HEK293 (cell line): ENCODE measurements at regions of chr6 and their contacts with region 1.

Region 1: GRCh38 chr6:131532580-131533039 is 40.4 kb upstream of the ARG1 start:
- H3K4me3 ChIP-seq: no peak overlapping the region
- H3K27ac ChIP-seq: no peak overlapping the region
- H3K4me1 ChIP-seq: no peaks in the 10 kb centered on the region
- CTCF ChIP-seq: no peak

Region 2: DNA sequence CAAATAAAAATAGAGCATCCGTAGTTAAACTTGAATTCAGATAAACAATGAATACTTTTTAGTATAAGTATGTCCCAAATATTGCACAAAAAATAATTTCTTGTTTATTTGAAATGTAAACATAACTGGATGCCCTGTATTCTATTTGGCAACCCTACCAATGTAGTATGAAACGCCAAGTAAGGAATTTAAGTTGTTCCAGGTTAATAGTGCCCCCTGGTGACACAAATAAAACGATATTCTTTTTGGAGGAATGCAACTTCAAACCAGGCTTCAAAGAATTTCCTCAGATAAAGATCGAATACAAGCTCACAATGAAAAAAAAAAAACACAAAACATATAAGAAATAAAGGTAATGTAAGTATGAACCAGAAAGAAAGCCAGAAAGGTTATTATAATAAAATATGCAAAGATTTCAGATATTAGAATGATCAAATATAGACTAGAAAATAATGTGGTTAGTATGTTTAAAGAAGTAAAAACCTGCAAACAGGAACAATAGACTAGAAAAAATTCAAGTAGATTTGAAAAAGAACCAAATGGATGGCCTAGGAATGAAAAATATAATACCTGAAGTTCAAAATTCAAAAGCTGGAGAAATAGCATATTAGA is 415.8 kb before region 1 on chr6:
- CTCF ChIA-PET with region 1: interaction called, 10 read pairs
- POLR2A ChIA-PET with region 1: no interaction called
- H3K4me3 ChIP-seq: no peak overlapping the region
- H3K27ac ChIP-seq: no peak overlapping the region
- H3K4me1 ChIP-seq: no peaks in the 10 kb centered on the region
- CTCF ChIP-seq: no peak

Region 3: DNA sequence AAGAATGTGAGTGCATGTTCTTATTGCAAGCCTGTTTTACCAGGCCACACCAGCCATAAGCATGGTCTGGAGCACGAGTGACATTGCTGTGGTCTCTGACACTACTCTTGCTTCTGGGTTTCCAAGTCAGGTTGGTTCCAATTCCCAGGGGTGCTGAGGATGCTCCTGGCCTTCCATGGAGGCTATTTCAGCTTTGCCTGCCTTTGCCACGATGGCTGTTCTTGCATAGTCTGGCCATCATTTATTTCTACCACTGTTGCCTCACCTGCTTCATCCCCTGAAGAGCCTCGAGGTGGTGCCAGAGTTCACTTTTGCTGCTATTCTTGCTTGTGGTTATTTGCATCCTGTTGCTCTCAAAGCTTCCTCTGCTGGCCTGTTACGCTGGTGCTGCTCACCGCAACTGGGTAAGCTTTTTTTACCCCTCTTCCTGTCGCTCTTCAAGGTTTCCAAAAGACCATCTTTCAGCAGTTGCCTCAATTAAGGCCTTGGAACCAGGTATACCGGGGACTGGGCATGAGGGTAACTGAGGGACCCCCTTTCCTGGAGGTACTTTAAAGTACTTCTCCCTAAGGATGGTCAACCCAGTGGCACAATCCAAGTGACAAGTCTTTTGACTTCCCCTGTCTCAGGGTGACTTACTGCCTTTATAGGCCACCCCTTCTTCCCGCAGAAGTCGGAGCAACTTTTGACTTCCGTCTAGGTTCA is 332.9 kb before region 1 on chr6:
- CTCF ChIA-PET with region 1: interaction called, 27 read pairs
- POLR2A ChIA-PET with region 1: no interaction called
- H3K4me3 ChIP-seq: no peak overlapping the region
- H3K27ac ChIP-seq: no peak overlapping the region
- H3K4me1 ChIP-seq: no peaks in the 10 kb centered on the region
- CTCF ChIP-seq: no peak; the same call in 1 of the 2 replicates

Region 4: GRCh38 chr6:131205481-131206244 is 326.9 kb before region 1 on chr6:
- CTCF ChIA-PET with region 1: interaction called, 27 read pairs
- POLR2A ChIA-PET with region 1: no interaction called
- H3K4me3 ChIP-seq: no peak overlapping the region
- H3K27ac ChIP-seq: no peak overlapping the region
- H3K4me1 ChIP-seq: no peaks in the 10 kb centered on the region
- CTCF ChIP-seq: no peak

Region 5: GRCh38 chr6:131519670-131520436 is 12.8 kb before region 1 on chr6:
- CTCF ChIA-PET with region 1: interaction called, 56 read pairs
- POLR2A ChIA-PET with region 1: no interaction called
- H3K4me3 ChIP-seq: no peak overlapping the region
- H3K27ac ChIP-seq: no peak overlapping the region
- H3K4me1 ChIP-seq: no peaks in the 10 kb centered on the region
- CTCF ChIP-seq: peak; percentile 49